Activated naive CD4-positive, alpha-beta T cell treated with anti-CD3 and anti-CD28 coated beads for 36 hours (primary cell): ENCODE measurements at regions of chr21 and their contacts with region 1.

Region 1: GRCh38 chr21:41283211-41283818 is 33.3 kb upstream of the FAM3B start:
- DNase-seq: peak; percentile 67
- H3K4me3 Mint-ChIP-seq: no peak overlapping the region
- H3K27ac Mint-ChIP-seq: no peak overlapping the region
- H3K4me1 Mint-ChIP-seq: no peaks in the 10 kb centered on the region
- H3K27me3 Mint-ChIP-seq: peaks cover 17% of the 10 kb centered on the region

Region 2: DNA sequence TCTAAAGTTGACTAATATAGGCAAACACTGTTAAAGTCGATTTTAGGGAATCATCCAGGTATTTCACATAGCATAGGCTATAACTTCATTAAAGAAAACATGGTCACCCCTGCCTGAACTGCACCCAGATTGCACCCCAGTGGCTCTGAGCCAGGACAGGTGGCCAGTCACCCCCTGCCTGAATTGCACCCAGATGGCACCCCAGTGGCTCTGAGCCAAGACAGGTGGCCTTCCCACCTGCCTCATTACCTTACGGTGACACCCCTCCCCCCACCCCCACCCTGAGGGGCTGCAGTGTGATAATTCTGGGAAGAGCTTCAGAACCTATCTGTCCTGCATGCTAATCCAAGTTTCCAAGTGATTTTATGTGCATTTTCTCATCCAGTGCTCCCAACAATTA is 515.3 kb before region 1 on chr21:
- CTCF ChIA-PET with region 1: no interaction called
- intact Hi-C with region 1: no loop called
- DNase-seq: no peak
- H3K4me3 Mint-ChIP-seq: no peak overlapping the region
- H3K27ac Mint-ChIP-seq: no peak overlapping the region
- H3K4me1 Mint-ChIP-seq: no peaks in the 10 kb centered on the region
- H3K27me3 Mint-ChIP-seq: peaks cover 7% of the 10 kb centered on the region

Region 3: GRCh38 chr21:41164043-41164442 is 119.3 kb before region 1 on chr21:
- CTCF ChIA-PET with region 1: no interaction called
- intact Hi-C with region 1: no loop called
- DNase-seq: no peak
- H3K4me3 Mint-ChIP-seq: no peak overlapping the region
- H3K27ac Mint-ChIP-seq: no peak overlapping the region
- H3K4me1 Mint-ChIP-seq: peaks cover 4% of the 10 kb centered on the region
- H3K27me3 Mint-ChIP-seq: peaks cover 28% of the 10 kb centered on the region

Region 4: GRCh38 chr21:41321211-41321907 is 38.0 kb after region 1 on chr21:
- CTCF ChIA-PET with region 1: interaction called, 14 read pairs
- intact Hi-C with region 1: no loop called
- DNase-seq: peak; percentile 54
- H3K4me3 Mint-ChIP-seq: no peak overlapping the region
- H3K27ac Mint-ChIP-seq: no peak overlapping the region
- H3K4me1 Mint-ChIP-seq: peaks cover 10% of the 10 kb centered on the region
- H3K27me3 Mint-ChIP-seq: peaks cover 9% of the 10 kb centered on the region

Region 5: GRCh38 chr21:41361786-41362604 is 78.7 kb after region 1 on chr21 and contains the start of gene MX2:
- CTCF ChIA-PET with region 1: interaction called, 13 read pairs
- intact Hi-C with region 1: loop called (anchors 5 kb)
- DNase-seq: peak; percentile 89
- H3K4me3 Mint-ChIP-seq: peak within 1 kb of the TSS; percentile 80
- H3K27ac Mint-ChIP-seq: peak within 1 kb of the TSS; percentile 97
- H3K4me1 Mint-ChIP-seq: peaks cover 57% of the 10 kb centered on the region
- H3K27me3 Mint-ChIP-seq: no peaks in the 10 kb centered on the region
- total RNA-seq, gene MX2: 32.5 to 33.4 TPM

Region 6: GRCh38 chr21:41369105-41369919 is 86.0 kb after region 1 on chr21:
- CTCF ChIA-PET with region 1: interaction called, 11 read pairs
- intact Hi-C with region 1: loop called (anchors 5 kb)
- DNase-seq: peak; percentile 69
- H3K4me3 Mint-ChIP-seq: peak overlapping the region; percentile 77
- H3K27ac Mint-ChIP-seq: peak overlapping the region; percentile 90
- H3K4me1 Mint-ChIP-seq: peaks cover 69% of the 10 kb centered on the region
- H3K27me3 Mint-ChIP-seq: no peaks in the 10 kb centered on the region

Region 7: DNA sequence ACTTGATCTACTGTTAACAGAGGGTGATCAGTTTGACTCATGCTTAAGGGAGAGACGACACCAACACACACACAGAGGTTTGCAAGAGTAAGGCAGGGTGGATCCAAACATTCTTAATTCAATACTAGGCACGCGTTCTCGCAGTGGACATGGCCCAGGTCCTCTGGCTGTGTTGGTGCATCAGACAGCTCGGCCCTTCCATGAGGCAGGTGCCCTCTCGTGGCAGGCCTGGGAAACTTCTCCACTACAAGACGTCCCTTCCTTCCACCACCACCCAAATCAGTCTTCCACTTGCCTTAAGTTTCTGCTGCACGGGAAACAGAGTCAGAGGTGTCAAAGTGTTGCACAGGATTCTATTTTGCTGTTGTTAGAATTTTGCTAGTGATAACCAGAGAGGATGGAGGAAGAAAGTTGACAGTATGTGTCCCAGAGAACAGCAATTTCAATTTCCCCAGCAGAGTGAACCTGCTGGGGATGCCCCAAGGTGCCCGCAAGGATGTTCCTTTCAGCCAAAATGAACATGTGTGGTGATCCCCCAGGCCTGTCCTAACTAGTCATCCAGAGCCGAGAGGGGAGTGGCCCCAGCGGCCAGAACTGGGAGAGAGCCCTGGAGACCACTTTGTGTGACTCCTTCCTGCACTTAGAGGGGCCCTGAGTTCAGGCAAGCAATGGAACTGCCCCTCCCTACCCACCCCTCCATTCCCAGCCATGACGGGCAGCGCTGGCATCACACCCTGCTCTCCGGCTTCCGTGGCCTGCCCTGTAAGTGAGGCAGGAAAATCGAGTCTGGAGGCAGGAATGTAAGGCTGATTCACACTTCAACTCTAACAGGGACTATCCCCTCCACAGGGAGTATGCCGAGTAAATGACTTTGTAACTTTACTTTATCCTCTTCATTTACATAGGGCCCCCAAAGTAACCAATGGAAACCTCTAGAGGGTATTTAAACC is 177.5 kb after region 1 on chr21:
- CTCF ChIA-PET with region 1: interaction called, 52 read pairs
- intact Hi-C with region 1: loop called (anchors 1 kb)
- DNase-seq: peak; percentile 71
- H3K4me3 Mint-ChIP-seq: no peak overlapping the region
- H3K27ac Mint-ChIP-seq: no peak overlapping the region
- H3K4me1 Mint-ChIP-seq: no peaks in the 10 kb centered on the region
- H3K27me3 Mint-ChIP-seq: no peaks in the 10 kb centered on the region

Region 8: GRCh38 chr21:41466024-41466835 is 182.9 kb after region 1 on chr21:
- CTCF ChIA-PET with region 1: interaction called, 21 read pairs
- intact Hi-C with region 1: no loop called
- DNase-seq: no peak
- H3K4me3 Mint-ChIP-seq: no peak overlapping the region
- H3K27ac Mint-ChIP-seq: no peak overlapping the region
- H3K4me1 Mint-ChIP-seq: no peaks in the 10 kb centered on the region
- H3K27me3 Mint-ChIP-seq: peaks cover 25% of the 10 kb centered on the region

Region 9: DNA sequence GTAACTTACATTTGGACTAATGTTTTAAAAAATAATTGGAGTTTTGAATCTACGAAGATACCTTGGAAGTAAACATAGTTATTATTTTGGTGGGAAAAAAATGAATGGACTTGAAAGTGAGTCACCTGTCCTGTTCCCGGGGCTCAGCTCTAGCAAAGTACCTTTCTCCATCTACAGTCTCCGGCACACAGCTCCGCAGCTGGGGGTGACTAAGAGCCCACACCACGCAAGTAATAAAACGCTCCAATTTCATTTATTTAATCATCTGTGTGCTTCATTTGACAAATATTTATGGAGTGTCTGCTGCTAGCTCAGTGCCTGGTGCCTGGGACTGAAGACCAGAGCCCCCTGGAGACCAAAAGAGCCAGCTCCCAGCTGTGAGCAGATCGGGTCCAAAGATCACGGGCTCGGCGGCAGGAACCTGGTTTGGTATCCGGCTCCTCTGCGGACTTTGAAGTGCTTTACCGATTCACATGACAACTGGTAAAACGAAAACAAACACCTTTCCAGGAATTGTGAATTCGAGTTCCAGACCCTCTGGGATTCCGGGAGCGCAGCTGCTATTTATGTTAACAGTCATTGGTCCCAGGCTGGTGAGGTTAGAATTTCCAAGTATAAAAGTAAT is 485.2 kb after region 1 on chr21:
- CTCF ChIA-PET with region 1: interaction called, 5 read pairs
- intact Hi-C with region 1: loop called (anchors 5 kb)
- DNase-seq: peak; percentile 35
- H3K4me3 Mint-ChIP-seq: peak overlapping the region; percentile 75
- H3K27ac Mint-ChIP-seq: no peak overlapping the region
- H3K4me1 Mint-ChIP-seq: peaks cover 21% of the 10 kb centered on the region
- H3K27me3 Mint-ChIP-seq: peaks cover 57% of the 10 kb centered on the region